ENCODE measurements at regions of chr1 and their contacts with region 1.

Region 1: DNA sequence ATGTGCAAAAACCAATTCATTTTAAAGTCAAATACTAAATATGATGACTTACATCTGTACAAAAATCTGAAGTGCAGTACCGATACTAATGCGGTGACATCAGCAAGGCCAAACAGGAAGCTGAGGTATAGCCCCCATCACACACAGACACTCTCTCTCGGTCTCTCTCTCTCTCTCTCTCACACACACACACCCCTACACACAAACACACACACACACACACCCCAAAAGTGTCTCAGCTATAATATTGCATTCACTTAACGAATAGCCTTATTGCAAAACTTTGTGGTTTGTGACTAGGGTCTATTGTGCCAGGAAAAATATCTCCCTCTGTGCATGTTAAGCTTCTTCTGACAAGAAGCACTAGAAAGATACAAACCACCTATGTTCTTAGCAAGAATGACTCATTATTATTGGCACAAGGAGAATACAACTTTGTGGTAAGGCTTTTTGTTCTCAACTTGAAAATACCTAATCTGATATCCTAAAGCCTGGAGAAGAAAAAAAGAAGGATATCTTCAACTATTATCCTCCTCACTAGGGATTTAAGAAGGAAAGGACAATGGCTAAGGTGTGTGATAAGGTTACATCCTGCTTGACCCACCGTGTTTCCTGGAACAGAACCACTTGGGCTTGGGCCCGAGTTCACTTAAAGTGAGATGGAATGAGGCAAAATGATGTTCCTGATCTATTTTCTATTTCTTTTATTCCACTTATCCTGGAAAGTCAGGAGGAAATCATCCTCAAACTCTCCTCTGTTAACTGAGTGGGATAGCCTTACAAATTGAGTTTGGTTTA is 107.1 kb downstream of the NIBAN1 start:
- DNase-seq: peak; percentile 80
- H3K4me3 Mint-ChIP-seq: peak overlapping the region; percentile 14
- H3K27ac Mint-ChIP-seq: peak overlapping the region; percentile 94
- H3K4me1 Mint-ChIP-seq: peaks cover 32% of the 10 kb centered on the region
- H3K27me3 Mint-ChIP-seq: peaks cover 10% of the 10 kb centered on the region

Region 2: GRCh38 chr1:184386312-184387068 is 480.7 kb before region 1 on chr1 and contains the start of gene C1orf21:
- CTCF ChIA-PET with region 1: no interaction called
- intact Hi-C with region 1: loop called (anchors 5 kb)
- DNase-seq: peak; percentile 80
- H3K4me3 Mint-ChIP-seq: peak within 1 kb of the TSS; percentile 78
- H3K27ac Mint-ChIP-seq: no peak within 1 kb of the TSS
- H3K4me1 Mint-ChIP-seq: peaks cover 14% of the 10 kb centered on the region
- H3K27me3 Mint-ChIP-seq: peaks cover 59% of the 10 kb centered on the region
- total RNA-seq, gene C1orf21: 1.2 to 1.4 TPM

Region 3: GRCh38 chr1:184754476-184755225 is 112.5 kb before region 1 on chr1 and contains the start of gene EDEM3:
- CTCF ChIA-PET with region 1: no interaction called
- intact Hi-C with region 1: loop called (anchors 1 kb)
- DNase-seq: peak; percentile 98
- H3K4me3 Mint-ChIP-seq: peak within 1 kb of the TSS; percentile 88
- H3K27ac Mint-ChIP-seq: peak within 1 kb of the TSS; percentile 88
- H3K4me1 Mint-ChIP-seq: peaks cover 36% of the 10 kb centered on the region
- H3K27me3 Mint-ChIP-seq: no peaks in the 10 kb centered on the region
- total RNA-seq, gene EDEM3: 9.9 to 10.5 TPM

Region 4: GRCh38 chr1:184892116-184892515 is 24.9 kb after region 1 on chr1:
- CTCF ChIA-PET with region 1: interaction called, 6 read pairs
- intact Hi-C with region 1: loop called (anchors 1 kb)
- DNase-seq: no peak
- H3K4me3 Mint-ChIP-seq: no peak overlapping the region
- H3K27ac Mint-ChIP-seq: no peak overlapping the region
- H3K4me1 Mint-ChIP-seq: peaks cover 30% of the 10 kb centered on the region
- H3K27me3 Mint-ChIP-seq: peaks cover 3% of the 10 kb centered on the region

Region 5: DNA sequence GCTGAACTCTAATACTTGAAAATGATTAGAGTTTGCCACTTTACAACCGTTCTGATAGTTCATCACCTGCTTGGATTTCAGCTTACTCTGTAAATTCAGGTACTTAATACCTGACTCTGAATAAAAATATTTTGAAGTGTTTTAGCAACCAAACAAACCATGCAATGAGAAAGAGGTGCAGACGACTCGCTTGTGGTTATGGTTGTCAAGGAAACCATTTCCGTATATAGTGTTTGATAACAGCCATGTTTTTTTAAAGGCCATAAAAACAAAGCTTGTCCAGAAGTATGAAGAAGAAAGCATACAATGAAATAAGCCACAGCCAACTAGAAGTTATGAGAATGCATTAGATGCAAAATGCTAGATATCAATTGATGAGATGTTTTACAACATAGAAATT is 699.8 kb after region 1 on chr1:
- CTCF ChIA-PET with region 1: no interaction called
- intact Hi-C with region 1: loop called (anchors 5 kb)
- DNase-seq: peak; percentile 57
- H3K4me3 Mint-ChIP-seq: no peak overlapping the region
- H3K27ac Mint-ChIP-seq: peak overlapping the region; percentile 70
- H3K4me1 Mint-ChIP-seq: peaks cover 68% of the 10 kb centered on the region
- H3K27me3 Mint-ChIP-seq: no peaks in the 10 kb centered on the region